ENCODE measurements at regions of chr3 and their contacts with region 1.

Region 1: DNA sequence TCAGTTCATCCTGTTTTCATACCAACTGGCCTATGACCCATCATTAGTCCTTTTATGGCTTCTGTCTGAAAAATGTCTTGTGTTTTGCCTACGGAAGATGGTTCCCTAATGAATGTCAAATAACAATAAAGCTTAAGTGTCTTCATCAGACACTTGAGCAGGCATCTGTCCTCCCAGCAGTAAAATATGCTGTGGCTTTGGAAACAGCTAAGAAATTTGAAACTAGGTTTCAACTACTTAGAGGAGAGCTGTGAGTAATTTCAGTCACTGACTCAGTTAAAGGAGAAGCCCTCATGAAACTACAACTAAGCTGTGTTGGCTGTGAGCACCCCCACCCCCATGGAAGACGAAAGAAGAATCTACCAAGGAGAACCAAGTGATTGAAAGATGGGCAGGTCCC is 409.4 kb upstream of the PPP2R3A start:
- DNase-seq: no peak
- ATAC-seq: no peak
- H3K4me3 ChIP-seq: no peak overlapping the region
- H3K27ac ChIP-seq: no peak overlapping the region
- H3K4me1 ChIP-seq: no peaks in the 10 kb centered on the region
- H3K27me3 ChIP-seq: peaks cover 0 to 11% (median 0%) of the 10 kb centered on the region in 9 donors
- CTCF ChIP-seq: no peak
- POLR2A ChIP-seq: no peak

Region 2: GRCh38 chr3:135491491-135492205 is 64.5 kb before region 1 on chr3:
- intact Hi-C with region 1: loop called in 1 of 10 experiments (anchors 10 kb)
- DNase-seq: no peak
- ATAC-seq: no peak
- H3K4me3 ChIP-seq: no peak overlapping the region
- H3K27ac ChIP-seq: no peak overlapping the region
- H3K4me1 ChIP-seq: no peaks in the 10 kb centered on the region
- H3K27me3 ChIP-seq: peaks cover 0 to 5% (median 0%) of the 10 kb centered on the region in 9 donors
- CTCF ChIP-seq: no peak
- POLR2A ChIP-seq: no peak

Measured in heart left ventricle (tissue), 16 donors.